ENCODE measurements at regions of chr16 and their contacts with region 1.

Region 1: GRCh38 chr16:11691771-11692170 is 23.5 kb downstream of the SNN start:
- DNase-seq: no peak
- ATAC-seq: no peak
- H3K4me3 ChIP-seq: no peak overlapping the region
- H3K4me3 Mint-ChIP-seq: no peak overlapping the region
- H3K27ac ChIP-seq: no peak overlapping the region
- H3K27ac Mint-ChIP-seq: no peak overlapping the region
- H3K4me1 ChIP-seq: peaks cover 11% of the 10 kb centered on the region
- H3K4me1 Mint-ChIP-seq: peaks cover 28% of the 10 kb centered on the region
- H3K27me3 ChIP-seq: no peaks in the 10 kb centered on the region
- H3K27me3 Mint-ChIP-seq: no peaks in the 10 kb centered on the region
- CTCF ChIP-seq: no peak

Region 2: DNA sequence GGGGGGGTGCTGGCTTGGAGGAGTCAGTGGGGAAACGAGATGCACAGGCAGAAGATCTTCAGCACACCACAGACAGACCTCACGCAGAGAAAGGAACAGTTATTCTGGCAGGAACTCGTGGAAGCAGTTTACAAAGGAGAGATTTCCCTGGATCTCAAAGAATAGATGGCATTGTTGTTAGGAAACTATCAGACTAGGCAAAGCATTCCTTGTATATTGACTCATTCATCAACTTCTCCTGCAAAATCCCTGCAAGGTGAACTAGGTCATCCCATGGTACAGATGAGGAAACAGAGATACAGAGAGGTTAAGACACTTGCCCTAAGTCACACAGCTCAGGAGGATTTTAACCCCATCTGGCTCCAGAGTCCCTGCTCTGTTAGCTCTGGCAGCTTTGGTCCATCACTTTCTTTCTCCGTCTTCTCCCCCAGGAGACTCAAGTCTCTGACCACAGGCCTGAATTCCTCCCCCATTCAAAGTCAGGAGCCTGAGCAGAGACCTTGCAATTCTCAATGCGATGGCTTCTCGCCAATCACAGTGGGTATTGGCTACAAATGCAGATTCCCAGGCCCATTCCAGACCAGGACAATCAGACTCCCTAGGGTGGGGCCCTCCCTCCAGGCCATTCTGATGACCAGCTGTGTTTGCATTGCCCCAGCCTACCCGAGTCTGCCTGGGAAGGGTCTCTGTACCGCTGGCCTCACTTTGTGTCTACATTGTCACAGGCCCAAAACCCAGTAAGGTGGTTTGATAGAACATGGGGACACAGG is 161.4 kb before region 1 on chr16:
- CTCF ChIA-PET with region 1: interaction called, 10 read pairs
- POLR2A ChIA-PET with region 1: no interaction called
- intact Hi-C with region 1: no loop called
- DNase-seq: no peak
- ATAC-seq: no peak
- H3K4me3 ChIP-seq: no peak overlapping the region
- H3K4me3 Mint-ChIP-seq: no peak overlapping the region
- H3K27ac ChIP-seq: no peak overlapping the region
- H3K27ac Mint-ChIP-seq: no peak overlapping the region
- H3K4me1 ChIP-seq: no peaks in the 10 kb centered on the region
- H3K4me1 Mint-ChIP-seq: peaks cover 3% of the 10 kb centered on the region
- H3K27me3 ChIP-seq: no peaks in the 10 kb centered on the region
- H3K27me3 Mint-ChIP-seq: no peaks in the 10 kb centered on the region
- CTCF ChIP-seq: no peak

Measured in CD8-positive, alpha-beta T cell (primary cell).